Mammary epithelial cell (primary cell): ENCODE measurements at regions of chr14 and their contacts with region 1.

Region 1: DNA sequence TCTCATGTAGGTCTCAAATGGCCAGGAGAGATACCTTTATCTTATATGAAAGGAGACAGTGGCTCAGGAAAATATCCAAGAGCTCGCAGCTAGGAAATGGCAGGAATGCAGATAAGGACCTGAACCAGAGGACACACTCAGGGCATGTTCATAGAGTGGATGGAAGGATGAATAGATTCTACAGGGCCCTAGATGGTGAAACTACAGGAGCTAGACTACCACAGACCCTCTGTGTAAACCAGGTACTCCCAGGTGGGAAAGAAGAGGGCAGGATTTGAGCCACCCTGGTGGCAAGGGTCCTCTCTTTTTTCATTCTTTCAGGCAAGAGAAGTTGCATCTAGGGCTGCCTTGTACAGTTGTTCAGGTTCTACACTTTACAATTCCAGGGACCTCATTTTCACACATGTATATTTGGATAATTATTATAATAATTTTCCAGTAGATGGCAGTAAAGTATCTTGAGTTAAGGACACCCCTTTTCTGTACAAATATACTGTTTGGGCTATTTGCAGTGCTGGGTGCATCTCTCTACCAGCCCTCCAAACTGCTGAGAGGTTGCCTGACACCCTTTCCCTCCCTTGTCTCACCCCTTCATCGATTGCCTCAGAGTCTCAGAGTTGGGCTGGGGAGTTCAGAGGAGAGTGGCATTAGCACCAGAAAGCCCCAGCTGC is 10.5 kb upstream of the ZDHHC22 start:
- DNase-seq: peak; percentile 20
- H3K4me3 ChIP-seq: no peak overlapping the region
- H3K27ac ChIP-seq: no peak overlapping the region
- H3K4me1 ChIP-seq: no peaks in the 10 kb centered on the region
- H3K27me3 ChIP-seq: no peaks in the 10 kb centered on the region
- CTCF ChIP-seq: peak; percentile 25 to 41

Region 2: GRCh38 chr14:77212943-77213678 is 61.1 kb after region 1 on chr14:
- CTCF ChIA-PET with region 1: interaction called, 12 read pairs
- dilution Hi-C with region 1: no loop called
- in situ Hi-C with region 1: loop called in 1 of 2 experiments (anchors 5 kb)
- intact Hi-C with region 1: loop called (anchors 1 kb)
- DNase-seq: peak; percentile 60
- H3K4me3 ChIP-seq: no peak overlapping the region
- H3K27ac ChIP-seq: no peak overlapping the region
- H3K4me1 ChIP-seq: no peaks in the 10 kb centered on the region
- H3K27me3 ChIP-seq: peaks cover 3% of the 10 kb centered on the region
- CTCF ChIP-seq: peak; percentile 81 to 97

Region 3: DNA sequence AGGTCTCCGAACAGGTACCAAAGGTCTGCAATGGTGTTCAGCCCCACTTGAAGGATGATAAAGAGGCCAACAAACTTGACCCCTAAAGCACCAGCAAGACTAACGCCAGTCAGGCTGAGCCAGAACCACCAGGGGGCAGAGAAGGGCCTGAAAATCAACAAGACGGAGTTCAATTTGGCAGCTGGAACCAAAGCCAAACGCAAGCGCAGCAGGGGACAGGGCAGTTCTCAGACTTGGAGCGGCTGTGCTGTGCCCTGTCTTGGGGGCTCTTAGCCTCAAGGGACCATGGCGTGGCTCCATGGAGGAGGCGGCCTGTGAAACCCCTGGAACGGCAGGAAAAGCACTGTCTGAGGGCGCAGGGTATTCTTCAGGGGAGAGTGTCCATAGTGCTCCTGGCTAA is 149.1 kb after region 1 on chr14:
- CTCF ChIA-PET with region 1: interaction called, 3 read pairs
- dilution Hi-C with region 1: no loop called
- in situ Hi-C with region 1: no loop called
- intact Hi-C with region 1: loop called (anchors 2 kb)
- DNase-seq: peak; percentile 52
- H3K4me3 ChIP-seq: no peak overlapping the region
- H3K27ac ChIP-seq: no peak overlapping the region
- H3K4me1 ChIP-seq: peaks cover 24% of the 10 kb centered on the region
- H3K27me3 ChIP-seq: no peaks in the 10 kb centered on the region
- CTCF ChIP-seq: peak; percentile 74 to 90

Region 4: GRCh38 chr14:77409131-77409533 is 257.1 kb after region 1 on chr14:
- CTCF ChIA-PET with region 1: no interaction called
- dilution Hi-C with region 1: no loop called
- in situ Hi-C with region 1: no loop called
- intact Hi-C with region 1: loop called (anchors 1 kb)
- DNase-seq: peak; percentile 18
- H3K4me3 ChIP-seq: no peak overlapping the region
- H3K27ac ChIP-seq: no peak overlapping the region
- H3K4me1 ChIP-seq: no peaks in the 10 kb centered on the region
- H3K27me3 ChIP-seq: no peaks in the 10 kb centered on the region
- CTCF ChIP-seq: peak in 1 of 2 donors; percentile 39

Region 5: GRCh38 chr14:77424862-77425261 is 272.8 kb after region 1 on chr14:
- CTCF ChIA-PET with region 1: no interaction called
- dilution Hi-C with region 1: no loop called
- in situ Hi-C with region 1: no loop called
- intact Hi-C with region 1: no loop called
- DNase-seq: no peak
- H3K4me3 ChIP-seq: no peak overlapping the region
- H3K27ac ChIP-seq: no peak overlapping the region
- H3K4me1 ChIP-seq: no peaks in the 10 kb centered on the region
- H3K27me3 ChIP-seq: no peaks in the 10 kb centered on the region
- CTCF ChIP-seq: no peak